ENCODE measurements at regions of chr5 and their contacts with region 1.

Region 1: DNA sequence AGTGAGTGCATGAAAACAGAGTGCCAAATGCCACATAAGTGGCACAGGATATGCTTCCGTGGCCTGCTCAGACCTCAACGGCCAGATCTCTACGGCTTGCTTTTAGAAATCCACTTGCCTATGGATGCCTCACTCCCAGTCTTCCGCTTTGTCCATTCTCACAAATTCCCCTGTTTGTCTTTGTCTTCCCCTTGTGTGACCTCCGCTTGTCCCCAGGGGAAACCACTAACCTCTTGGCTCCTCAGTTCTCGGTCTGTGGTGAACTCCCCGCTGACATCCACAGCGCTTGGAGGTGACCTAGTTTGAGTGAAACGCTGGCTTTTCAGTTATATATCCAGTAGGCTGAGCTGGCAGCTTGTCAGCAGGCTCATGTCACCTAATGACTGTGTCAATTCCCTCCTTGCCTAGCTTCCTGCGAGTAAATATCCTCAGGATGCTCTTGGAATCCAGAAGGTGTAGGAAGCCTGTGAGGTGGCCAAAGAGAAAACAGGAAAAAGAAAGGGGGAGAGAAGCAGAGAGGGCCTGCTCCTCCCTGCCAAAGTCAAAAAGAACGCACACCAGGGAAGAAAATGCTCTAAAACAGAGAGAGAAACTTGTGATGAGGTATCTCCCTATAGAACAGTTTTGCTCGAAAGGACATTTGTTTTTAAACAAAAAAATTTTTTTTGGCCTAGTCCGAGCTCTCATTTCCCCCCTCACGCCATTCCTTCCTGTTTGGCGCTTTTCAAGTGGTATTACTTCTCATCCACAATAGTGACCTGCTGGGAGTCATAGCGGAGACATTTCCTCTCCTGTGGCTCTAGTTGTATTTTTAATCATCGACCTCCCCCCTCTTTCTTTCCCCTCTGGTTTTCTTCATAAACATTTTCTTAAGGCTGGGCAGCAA is 101.6 kb upstream of the SPRY4 start:
- DNase-seq: peak; percentile 77 to 86 (median 82)
- ATAC-seq: peak; percentile 53 to 86 (median 76)
- H3K4me3 ChIP-seq: peak overlapping the region in 2 of 12 donors; percentile 1 to 16
- H3K27ac ChIP-seq: peak overlapping the region; percentile 12 to 80 (median 52)
- H3K4me1 ChIP-seq: peaks cover 0 to 51% (median 30%) of the 10 kb centered on the region in 12 donors
- H3K27me3 ChIP-seq: no peaks in the 10 kb centered on the region
- CTCF ChIP-seq: no peak
- POLR2A ChIP-seq: no peak

Region 2: GRCh38 chr5:142356716-142357473 is 69.5 kb before region 1 on chr5:
- intact Hi-C with region 1: loop called in 6 of 10 experiments (anchors 5 to 10 kb)
- DNase-seq: peak; percentile 89 to 93 (median 91)
- ATAC-seq: peak; percentile 74 to 93 (median 92)
- H3K4me3 ChIP-seq: peak overlapping the region; percentile 52 to 73 (median 64)
- H3K27ac ChIP-seq: peak overlapping the region; percentile 85 to 97 (median 94)
- H3K4me1 ChIP-seq: peaks cover 0 to 22% (median 12%) of the 10 kb centered on the region in 12 donors
- H3K27me3 ChIP-seq: peaks cover 0 to 33% (median 0%) of the 10 kb centered on the region in 9 donors
- CTCF ChIP-seq: peak in 1 of 12 donors; percentile 16
- POLR2A ChIP-seq: peak; percentile 7 to 62

Region 3: DNA sequence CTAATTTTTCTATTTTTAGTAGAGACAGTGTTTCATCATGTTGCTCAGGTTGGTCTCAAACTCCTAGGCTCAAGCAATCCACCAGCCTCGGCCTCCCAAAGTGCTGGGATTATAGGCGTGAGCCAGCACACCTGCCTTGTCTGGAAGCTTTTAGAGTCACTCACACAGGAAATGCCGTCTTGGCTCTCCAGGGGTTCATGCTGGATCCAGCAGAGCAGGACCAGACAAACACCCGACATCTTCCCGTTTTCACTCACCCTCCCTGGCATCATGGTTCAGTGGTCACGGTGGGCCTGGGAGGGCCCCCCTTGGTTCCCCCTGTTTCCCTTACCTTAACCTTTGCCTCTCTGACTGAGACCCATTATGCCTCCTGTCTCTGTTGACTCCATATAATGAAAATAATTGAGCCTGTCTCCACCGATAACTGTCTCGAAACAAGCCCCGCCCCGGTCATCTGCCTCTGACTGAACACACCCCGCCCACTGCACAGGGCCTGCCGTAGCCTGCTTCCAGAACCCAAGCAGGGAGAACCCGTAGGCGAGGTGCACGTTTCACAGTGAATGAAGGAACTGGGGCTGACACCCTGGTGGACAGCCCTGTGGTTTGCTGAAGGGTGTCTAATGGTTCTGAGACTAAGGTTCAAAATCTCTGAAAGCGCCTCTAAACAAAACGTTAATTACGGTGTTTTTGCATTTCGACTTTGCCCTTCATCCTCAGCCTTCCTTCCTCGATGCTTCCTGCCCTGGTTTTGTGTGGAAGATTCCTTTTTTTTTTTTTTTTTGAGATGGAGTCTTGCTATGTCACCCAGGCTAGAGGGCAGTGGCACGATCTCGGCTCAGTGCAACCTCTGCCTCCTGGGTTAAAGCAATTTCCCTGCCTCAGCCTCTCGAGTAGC is 61.9 kb before region 1 on chr5:
- intact Hi-C with region 1: loop called in 6 of 10 experiments (anchors 5 to 10 kb)
- DNase-seq: peak; percentile 65 to 82 (median 73)
- ATAC-seq: peak in 3 of 4 donors; percentile 32 to 53 (median 48)
- H3K4me3 ChIP-seq: peak overlapping the region in 8 of 12 donors; percentile 2 to 34 (median 24)
- H3K27ac ChIP-seq: peak overlapping the region in 11 of 12 donors; percentile 54 to 91 (median 85)
- H3K4me1 ChIP-seq: peaks cover 0 to 30% (median 21%) of the 10 kb centered on the region in 12 donors
- H3K27me3 ChIP-seq: peaks cover 0 to 25% (median 0%) of the 10 kb centered on the region in 9 donors
- CTCF ChIP-seq: no peak
- POLR2A ChIP-seq: no peak

Region 4: DNA sequence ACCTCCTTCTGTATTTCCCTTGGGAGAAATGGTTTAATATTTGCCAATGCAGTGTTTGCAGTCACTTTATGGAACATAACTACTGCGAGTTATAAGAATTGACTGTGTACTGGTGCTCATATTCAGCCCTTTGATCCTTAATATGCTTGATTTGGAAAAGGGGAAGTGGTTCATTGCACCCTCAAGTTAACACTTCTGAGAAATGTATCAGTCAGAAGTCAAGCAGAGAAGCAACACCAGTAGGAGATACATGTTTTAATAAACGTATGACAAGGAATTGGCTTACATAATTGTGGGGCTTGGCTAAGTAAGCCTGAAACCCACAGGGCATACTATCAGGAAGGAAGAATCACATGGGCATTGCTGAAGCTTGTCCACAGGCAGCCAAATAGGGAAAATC is 29.5 kb after region 1 on chr5:
- intact Hi-C with region 1: no loop called
- DNase-seq: no peak
- ATAC-seq: no peak
- H3K4me3 ChIP-seq: no peak overlapping the region
- H3K27ac ChIP-seq: no peak overlapping the region
- H3K4me1 ChIP-seq: peaks cover 0 to 15% (median 5%) of the 10 kb centered on the region in 12 donors
- H3K27me3 ChIP-seq: no peaks in the 10 kb centered on the region
- CTCF ChIP-seq: no peak
- POLR2A ChIP-seq: no peak

Measured in heart left ventricle (tissue), 16 donors.